WTC11 (cell line): ENCODE measurements at regions of chr18 and their contacts with region 1.

Region 1: GRCh38 chr18:5021558-5021957 is 175.5 kb downstream of the AKAIN1 start:
- DNase-seq: no peak
- ATAC-seq: no peak
- H3K4me3 Mint-ChIP-seq: no peak overlapping the region
- H3K27ac Mint-ChIP-seq: no peak overlapping the region
- H3K4me1 Mint-ChIP-seq: no peaks in the 10 kb centered on the region
- H3K27me3 Mint-ChIP-seq: peaks cover 3% of the 10 kb centered on the region; the same call in 1 of the 2 replicates
- CTCF ChIP-seq: no peak

Region 2: GRCh38 chr18:4750393-4751346 is 270.9 kb before region 1 on chr18:
- CTCF ChIA-PET with region 1: interaction called, 10 read pairs
- POLR2A ChIA-PET with region 1: no interaction called
- DNase-seq: no peak
- ATAC-seq: no peak
- H3K4me3 Mint-ChIP-seq: no peak overlapping the region
- H3K27ac Mint-ChIP-seq: no peak overlapping the region
- H3K4me1 Mint-ChIP-seq: no peaks in the 10 kb centered on the region
- H3K27me3 Mint-ChIP-seq: no peaks in the 10 kb centered on the region
- CTCF ChIP-seq: no peak

Region 3: GRCh38 chr18:4765401-4765800 is 256.2 kb before region 1 on chr18:
- CTCF ChIA-PET with region 1: interaction called, 23 read pairs
- POLR2A ChIA-PET with region 1: no interaction called
- DNase-seq: peak; percentile 58
- ATAC-seq: peak; percentile 83
- H3K4me3 Mint-ChIP-seq: no peak overlapping the region
- H3K27ac Mint-ChIP-seq: no peak overlapping the region
- H3K4me1 Mint-ChIP-seq: peaks cover 14% of the 10 kb centered on the region
- H3K27me3 Mint-ChIP-seq: no peaks in the 10 kb centered on the region
- CTCF ChIP-seq: no peak

Region 4: DNA sequence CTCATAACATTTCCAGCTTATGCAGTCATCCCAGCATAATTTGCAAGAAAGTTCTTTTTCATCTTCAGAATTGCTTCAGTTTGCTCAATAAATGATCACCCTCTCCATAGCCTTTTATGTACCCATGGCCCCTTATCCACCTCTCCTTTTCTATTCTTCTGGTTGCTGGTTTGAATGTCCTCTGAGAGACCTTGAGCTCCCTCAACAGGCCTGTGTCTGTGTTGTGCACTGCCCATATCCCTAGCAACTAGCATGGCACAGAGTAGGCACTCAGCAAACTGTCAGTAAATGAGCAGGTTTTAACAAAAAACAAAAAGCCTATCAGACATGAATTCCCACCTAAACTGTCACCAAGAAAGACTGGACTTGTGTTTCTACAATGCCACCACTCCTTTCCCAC is 15.0 kb after region 1 on chr18:
- CTCF ChIA-PET with region 1: interaction called, 18 read pairs
- POLR2A ChIA-PET with region 1: no interaction called
- DNase-seq: no peak
- ATAC-seq: peak; percentile 74
- H3K4me3 Mint-ChIP-seq: no peak overlapping the region
- H3K27ac Mint-ChIP-seq: no peak overlapping the region
- H3K4me1 Mint-ChIP-seq: peaks cover 27% of the 10 kb centered on the region
- H3K27me3 Mint-ChIP-seq: peaks cover 54% of the 10 kb centered on the region
- CTCF ChIP-seq: no peak

Region 5: DNA sequence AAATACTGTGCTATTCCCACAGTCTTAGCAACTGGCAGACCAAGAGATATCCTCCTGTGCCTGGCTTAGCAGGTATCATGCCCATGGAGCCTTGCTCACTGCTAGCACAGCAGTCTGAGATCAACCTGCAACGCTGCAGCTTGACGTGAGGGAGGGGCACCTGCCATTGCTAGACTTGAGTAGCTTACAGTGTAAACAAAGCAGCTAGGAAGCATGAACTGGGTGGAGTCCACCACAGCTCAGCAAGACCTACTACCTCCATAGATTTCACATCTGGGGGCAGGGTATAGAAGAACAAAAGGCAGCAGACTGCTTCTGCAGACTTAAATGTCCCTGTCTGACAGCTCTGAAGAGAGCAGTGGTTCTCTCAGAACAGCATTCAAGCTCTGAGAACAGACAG is 100.7 kb after region 1 on chr18:
- CTCF ChIA-PET with region 1: no interaction called
- POLR2A ChIA-PET with region 1: no interaction called
- DNase-seq: no peak
- ATAC-seq: no peak
- H3K4me3 Mint-ChIP-seq: no peak overlapping the region
- H3K27ac Mint-ChIP-seq: no peak overlapping the region
- H3K4me1 Mint-ChIP-seq: no peaks in the 10 kb centered on the region
- H3K27me3 Mint-ChIP-seq: peaks cover 3% of the 10 kb centered on the region; the same call in 1 of the 2 replicates
- CTCF ChIP-seq: no peak